Heart right ventricle (tissue), 16 donors: ENCODE measurements at regions of chr15 and their contacts with region 1.

Region 1: DNA sequence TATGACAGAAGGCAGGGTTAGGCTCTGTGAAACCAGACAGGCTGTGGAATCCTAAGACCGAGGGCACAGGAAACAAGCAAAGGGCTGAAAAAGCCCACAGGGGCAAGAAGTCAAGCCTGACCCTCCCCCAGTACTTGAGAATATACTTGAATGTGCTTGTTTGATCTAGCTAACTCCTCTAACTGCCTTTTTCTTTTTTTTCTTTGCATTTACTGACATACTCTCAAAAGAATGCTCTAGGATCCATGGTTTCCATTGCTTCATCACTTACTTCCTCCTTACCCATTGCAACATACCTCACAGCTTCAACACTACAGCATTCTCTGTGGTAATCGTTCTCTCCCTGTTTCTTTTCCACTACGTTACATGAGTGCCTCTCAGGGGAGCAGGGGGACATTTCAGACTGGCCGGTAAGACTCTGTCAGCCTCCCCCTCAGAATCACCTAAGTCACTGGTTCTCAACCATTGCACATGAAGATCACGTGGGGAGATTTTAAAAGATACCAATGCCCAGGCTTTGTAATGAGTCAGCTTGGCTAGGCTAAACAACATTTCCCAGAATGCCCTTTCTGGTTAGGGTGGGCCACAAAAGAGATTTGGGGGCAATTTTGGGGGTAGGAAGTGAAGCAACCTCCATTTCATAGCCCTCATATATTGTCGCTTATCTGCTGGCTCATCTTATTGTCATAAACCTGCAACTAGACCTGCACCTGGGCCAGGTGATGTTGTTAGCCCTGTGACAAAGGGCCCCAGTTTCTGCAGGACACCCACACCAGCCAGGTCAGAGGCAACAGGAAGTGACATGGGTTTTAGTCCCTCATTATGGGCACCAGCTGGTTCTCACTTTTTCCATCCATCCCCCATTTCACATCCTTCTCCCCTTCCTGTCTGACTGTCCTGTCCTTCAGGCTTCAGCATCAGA is 24.6 kb upstream of the RSL24D1 start:
- DNase-seq: no peak
- ATAC-seq: peak in 7 of 8 donors; percentile 38 to 87 (median 67)
- H3K4me3 ChIP-seq: peak overlapping the region in 1 of 10 donors; percentile 18
- H3K27ac ChIP-seq: peak overlapping the region in 3 of 10 donors; percentile 10 to 91 (median 48)
- H3K4me1 ChIP-seq: peaks cover 0 to 78% (median 0%) of the 10 kb centered on the region in 9 donors
- H3K27me3 ChIP-seq: no peaks in the 10 kb centered on the region
- CTCF ChIP-seq: no peak

Region 2: DNA sequence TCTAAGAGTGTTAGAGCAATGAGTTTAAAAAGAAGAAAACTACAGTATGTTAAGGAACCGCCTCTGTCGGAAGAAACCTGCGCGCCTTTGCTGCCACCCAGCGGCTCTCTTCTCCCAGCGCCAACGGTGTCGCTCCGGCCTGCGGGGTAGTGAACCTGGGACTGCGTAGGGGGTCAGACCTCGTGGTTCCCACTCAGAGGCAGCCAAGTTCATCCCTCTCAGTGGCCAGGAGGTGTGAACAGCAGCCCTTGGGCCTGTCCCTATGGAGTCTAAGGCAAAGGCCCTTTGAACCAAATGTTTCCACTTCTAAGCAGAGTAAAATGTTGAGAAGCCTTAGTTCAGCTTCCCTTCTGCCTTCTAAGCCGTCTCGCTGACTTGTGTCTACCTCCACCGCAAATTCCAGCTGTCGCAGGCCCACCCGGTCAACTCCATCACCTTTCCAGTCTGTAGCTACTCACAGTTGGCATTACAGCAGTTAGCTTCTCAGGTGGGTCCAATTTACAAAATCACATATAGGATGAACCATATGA is 69.2 kb after region 1 on chr15:
- intact Hi-C with region 1: loop called (anchors 1 to 5 kb)
- DNase-seq: peak; percentile 81 to 83
- ATAC-seq: peak; percentile 89 to 97 (median 94)
- H3K4me3 ChIP-seq: peak overlapping the region; percentile 70 to 92 (median 85)
- H3K27ac ChIP-seq: peak overlapping the region in 9 of 10 donors; percentile 77 to 98 (median 88)
- H3K4me1 ChIP-seq: peaks cover 0 to 32% (median 11%) of the 10 kb centered on the region in 9 donors
- H3K27me3 ChIP-seq: no peaks in the 10 kb centered on the region
- CTCF ChIP-seq: peak; percentile 66 to 97 (median 88)

Region 3: DNA sequence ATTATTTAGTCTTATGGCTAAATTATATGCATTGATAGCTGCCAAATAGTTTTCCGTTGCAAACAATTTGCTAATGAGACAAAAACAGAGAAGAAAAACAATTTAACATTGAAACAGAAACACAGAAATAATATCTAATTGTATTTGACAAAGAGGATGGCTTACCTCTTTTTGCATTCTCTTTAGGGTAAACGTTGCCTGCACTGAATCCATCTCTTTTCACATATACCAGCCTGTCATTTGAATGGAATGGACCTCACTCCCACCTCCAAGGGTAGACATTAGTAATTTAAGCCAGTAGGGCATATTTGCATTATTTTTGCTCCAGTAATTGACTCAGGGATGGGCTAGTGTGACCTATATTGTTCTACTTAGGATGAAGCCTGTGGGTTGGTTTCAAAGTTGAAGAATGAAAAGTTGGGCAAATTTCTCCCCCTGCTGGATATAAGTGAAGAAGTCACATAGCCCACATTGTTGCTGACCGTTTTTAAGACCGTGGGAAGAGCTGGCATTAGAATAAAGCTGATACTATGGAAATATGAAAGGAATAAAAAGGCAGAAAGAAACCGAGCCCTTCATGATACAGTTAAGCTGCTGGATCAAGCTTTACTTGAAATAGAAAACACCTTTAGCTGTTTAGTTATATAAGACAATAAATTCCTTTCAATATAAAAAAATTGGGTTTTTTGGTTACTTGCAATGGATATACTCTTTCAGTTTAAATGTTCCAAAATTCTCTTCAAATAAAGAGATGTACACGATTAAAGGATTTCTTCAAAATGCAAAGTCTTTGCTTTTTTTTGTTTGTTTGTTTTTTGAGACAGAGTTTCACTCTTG is 213.9 kb after region 1 on chr15:
- intact Hi-C with region 1: loop called in 9 of 10 experiments (anchors 5 to 10 kb)
- DNase-seq: no peak
- ATAC-seq: peak in 2 of 8 donors; percentile 55
- H3K4me3 ChIP-seq: no peak overlapping the region
- H3K27ac ChIP-seq: no peak overlapping the region
- H3K4me1 ChIP-seq: no peaks in the 10 kb centered on the region
- H3K27me3 ChIP-seq: no peaks in the 10 kb centered on the region
- CTCF ChIP-seq: peak in 8 of 9 donors; percentile 23 to 61 (median 49)

Region 4: DNA sequence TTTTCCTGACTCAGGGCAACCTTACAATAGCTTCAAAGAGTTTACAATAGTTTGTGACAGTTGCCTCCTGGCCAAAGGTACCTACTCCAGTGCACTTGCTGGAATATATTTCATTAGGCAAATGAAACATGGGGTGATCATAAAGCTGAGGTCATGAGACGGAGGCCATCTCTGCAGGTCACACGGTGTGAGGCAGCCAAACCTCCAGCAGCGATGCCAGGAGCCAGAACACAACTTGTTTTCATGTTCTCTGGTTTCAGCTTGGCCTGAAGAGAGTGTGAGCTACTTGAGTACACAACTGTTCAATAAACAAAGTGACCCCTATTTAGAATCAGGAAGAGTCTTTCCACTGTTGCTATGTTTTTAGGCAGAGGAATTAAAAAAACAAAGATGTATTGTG is 409.5 kb after region 1 on chr15:
- intact Hi-C with region 1: loop called in 1 of 10 experiments (anchors 10 kb)
- DNase-seq: no peak
- ATAC-seq: no peak
- H3K4me3 ChIP-seq: no peak overlapping the region
- H3K27ac ChIP-seq: no peak overlapping the region
- H3K4me1 ChIP-seq: no peaks in the 10 kb centered on the region
- H3K27me3 ChIP-seq: no peaks in the 10 kb centered on the region
- CTCF ChIP-seq: no peak